Natural killer cell (primary cell): ENCODE measurements at regions of chr12 and their contacts with region 1.

Region 1: GRCh38 chr12:122225683-122226407 is at the start of gene DIABLO:
- DNase-seq: peak; percentile 99 to 100
- ATAC-seq: peak; percentile 86 to 96 (median 89)
- H3K4me3 ChIP-seq: peak within 1 kb of the TSS; percentile 93
- H3K4me3 Mint-ChIP-seq: peak within 1 kb of the TSS; percentile 93
- H3K27ac ChIP-seq: peak within 1 kb of the TSS; percentile 97
- H3K27ac Mint-ChIP-seq: peak within 1 kb of the TSS; percentile 93 to 99
- H3K4me1 ChIP-seq: peaks cover 32% of the 10 kb centered on the region
- H3K4me1 Mint-ChIP-seq: peaks cover 39 to 42% of the 10 kb centered on the region in 2 donors
- H3K27me3 ChIP-seq: no peaks in the 10 kb centered on the region
- H3K27me3 Mint-ChIP-seq: no peaks in the 10 kb centered on the region
- CTCF ChIP-seq: no peak
- total RNA-seq, gene DIABLO: 84.8 to 102 (median 101) TPM

Region 2: DNA sequence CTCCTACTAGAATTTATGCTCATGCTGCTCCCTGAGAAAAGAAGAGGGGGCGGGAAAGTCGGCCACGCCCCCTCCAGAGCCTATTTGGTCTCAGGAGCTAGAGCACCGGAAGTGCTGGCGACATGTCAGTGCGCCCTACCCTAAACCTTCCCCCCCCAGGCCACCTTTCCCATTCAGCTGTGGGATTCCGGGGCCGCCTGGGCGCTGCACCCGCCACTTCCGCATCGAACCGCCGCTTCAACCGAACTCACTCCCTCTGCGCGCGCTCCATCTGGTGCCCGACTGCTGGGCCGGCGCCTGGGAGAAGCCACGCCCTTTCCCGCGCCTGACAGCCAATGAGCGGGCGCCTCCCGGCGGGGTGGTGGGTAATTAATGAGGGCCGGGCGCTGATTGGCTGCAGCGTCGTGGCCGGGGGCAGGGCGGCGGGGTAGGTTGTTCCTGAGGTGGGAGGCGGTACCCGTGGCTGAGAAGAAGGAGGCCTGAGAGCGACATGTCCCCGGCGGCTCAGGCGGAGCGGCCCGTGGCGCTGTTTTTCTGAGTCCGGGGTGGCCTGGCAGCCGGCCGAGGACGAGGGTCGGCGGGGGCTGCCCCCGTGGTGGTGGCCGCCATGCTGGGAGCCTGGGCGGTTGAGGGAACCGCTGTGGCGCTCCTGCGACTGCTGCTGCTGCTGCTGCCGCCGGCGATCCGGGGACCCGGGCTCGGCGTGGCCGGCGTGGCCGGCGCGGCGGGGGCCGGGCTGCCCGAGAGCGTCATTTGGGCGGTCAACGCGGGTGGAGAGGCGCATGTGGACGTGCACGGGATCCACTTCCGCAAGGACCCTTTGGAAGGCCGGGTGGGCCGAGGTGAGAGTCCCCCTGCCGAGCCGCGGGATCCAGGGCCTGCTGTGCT is 1538.9 kb before region 1 on chr12 and contains the start of gene MLEC:
- intact Hi-C with region 1: loop called (anchors 5 kb)
- DNase-seq: peak; percentile 99
- ATAC-seq: peak; percentile 82 to 92 (median 83)
- H3K4me3 ChIP-seq: peak within 1 kb of the TSS; percentile 58
- H3K4me3 Mint-ChIP-seq: peak within 1 kb of the TSS; percentile 93
- H3K27ac ChIP-seq: peak within 1 kb of the TSS; percentile 80
- H3K27ac Mint-ChIP-seq: peak within 1 kb of the TSS; percentile 90
- H3K4me1 ChIP-seq: peaks cover 40% of the 10 kb centered on the region
- H3K4me1 Mint-ChIP-seq: peaks cover 34 to 42% of the 10 kb centered on the region in 2 donors
- H3K27me3 ChIP-seq: no peaks in the 10 kb centered on the region
- H3K27me3 Mint-ChIP-seq: no peaks in the 10 kb centered on the region
- CTCF ChIP-seq: no peak
- total RNA-seq, gene MLEC: 47.4 to 52.8 (median 49.6) TPM

Region 3: DNA sequence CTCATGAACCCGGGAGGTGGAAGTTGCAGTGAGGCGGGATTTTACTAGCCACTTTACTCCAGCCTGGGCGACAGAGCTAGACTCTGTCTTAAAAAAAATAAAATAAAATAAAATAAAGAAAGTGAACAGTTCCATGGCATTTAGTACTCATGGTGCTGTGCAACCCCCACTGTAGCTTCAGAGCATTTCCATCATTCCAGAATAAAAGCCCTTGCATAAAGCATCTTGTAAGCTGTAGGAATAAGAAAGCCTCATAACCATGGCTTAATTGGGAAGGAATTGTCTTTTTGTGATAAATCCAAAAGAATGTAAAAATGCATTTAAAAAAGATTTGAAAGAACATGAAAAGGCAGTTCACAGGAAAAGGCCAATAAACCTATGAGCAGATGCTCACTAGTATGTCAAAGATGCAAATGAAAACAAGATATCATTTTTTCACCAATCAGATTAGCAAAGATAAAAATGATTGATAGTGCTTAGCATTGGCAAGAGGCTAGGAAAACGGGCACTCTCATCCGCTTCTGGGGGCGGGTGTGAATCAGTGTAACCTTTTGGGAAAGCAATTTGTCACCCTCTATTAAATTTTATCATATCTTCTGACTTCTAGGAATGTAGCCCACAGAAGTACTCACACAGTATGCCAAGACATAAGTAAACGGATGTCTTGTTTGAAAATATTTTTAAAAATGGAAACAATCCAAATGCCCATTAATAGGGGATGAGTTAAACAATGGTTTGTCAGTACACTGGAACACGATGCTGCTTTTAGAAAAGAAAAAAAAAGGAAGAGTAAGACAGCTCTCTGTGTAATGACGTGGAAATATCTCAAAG is 260.8 kb before region 1 on chr12:
- intact Hi-C with region 1: no loop called
- DNase-seq: no peak
- ATAC-seq: no peak
- H3K4me3 ChIP-seq: no peak overlapping the region
- H3K4me3 Mint-ChIP-seq: no peak overlapping the region
- H3K27ac ChIP-seq: no peak overlapping the region
- H3K27ac Mint-ChIP-seq: no peak overlapping the region
- H3K4me1 ChIP-seq: peaks cover 12% of the 10 kb centered on the region
- H3K4me1 Mint-ChIP-seq: no peaks in the 10 kb centered on the region
- H3K27me3 ChIP-seq: no peaks in the 10 kb centered on the region
- H3K27me3 Mint-ChIP-seq: no peaks in the 10 kb centered on the region
- CTCF ChIP-seq: no peak

Region 4: DNA sequence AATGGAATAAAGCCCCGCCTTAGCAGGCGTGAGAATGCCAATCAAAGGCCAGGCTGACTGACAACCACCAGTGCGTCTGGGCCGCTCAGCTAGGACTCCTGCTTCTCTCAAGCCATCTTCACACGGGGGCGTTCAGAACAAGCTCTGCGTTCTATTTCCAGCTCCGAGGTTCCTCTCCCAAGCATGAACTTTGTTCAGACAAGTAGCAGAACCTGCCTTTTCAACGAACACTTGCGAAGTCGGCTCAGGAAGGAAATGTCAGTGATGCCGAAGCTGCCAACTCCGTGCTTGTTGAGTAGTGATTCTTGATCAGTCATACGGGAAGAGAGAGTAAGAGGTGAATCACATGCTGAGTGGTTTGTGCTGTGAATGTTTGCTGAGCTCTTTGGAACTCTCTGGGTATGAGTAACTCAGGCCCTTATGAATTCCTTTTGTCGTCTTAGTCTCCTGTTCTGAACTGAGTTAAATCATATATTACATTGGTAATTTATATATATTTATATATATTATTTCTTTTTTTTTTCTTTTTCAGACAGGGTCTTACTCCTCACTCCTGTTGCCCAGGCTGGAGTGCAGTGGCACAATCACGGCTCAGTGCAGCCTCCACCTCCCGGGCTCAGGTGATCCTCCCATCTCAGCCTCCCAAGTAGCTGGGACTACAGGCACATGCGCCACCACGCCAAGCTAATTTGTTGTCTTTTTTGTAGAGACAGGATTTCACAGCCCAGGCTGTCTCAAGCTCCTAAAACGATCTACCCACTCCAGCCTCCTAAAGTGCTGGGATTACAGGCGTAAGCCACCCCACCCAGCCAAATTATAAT is 233.6 kb before region 1 on chr12:
- intact Hi-C with region 1: no loop called
- DNase-seq: peak in 1 of 2 donors; percentile 51
- ATAC-seq: peak; percentile 34 to 45 (median 37)
- H3K4me3 ChIP-seq: no peak overlapping the region
- H3K4me3 Mint-ChIP-seq: no peak overlapping the region
- H3K27ac ChIP-seq: peak overlapping the region; percentile 14
- H3K27ac Mint-ChIP-seq: no peak overlapping the region
- H3K4me1 ChIP-seq: peaks cover 4% of the 10 kb centered on the region
- H3K4me1 Mint-ChIP-seq: no peaks in the 10 kb centered on the region
- H3K27me3 ChIP-seq: no peaks in the 10 kb centered on the region
- H3K27me3 Mint-ChIP-seq: peaks cover 0 to 5% of the 10 kb centered on the region in 2 donors
- CTCF ChIP-seq: no peak

Region 5: GRCh38 chr12:122174155-122174845 is 51.5 kb before region 1 on chr12 and contains the start of gene IL31:
- intact Hi-C with region 1: no loop called
- DNase-seq: no peak
- ATAC-seq: no peak
- H3K4me3 ChIP-seq: no peak within 1 kb of the TSS
- H3K4me3 Mint-ChIP-seq: no peak within 1 kb of the TSS
- H3K27ac ChIP-seq: no peak within 1 kb of the TSS
- H3K27ac Mint-ChIP-seq: no peak within 1 kb of the TSS
- H3K4me1 ChIP-seq: no peaks in the 10 kb centered on the region
- H3K4me1 Mint-ChIP-seq: no peaks in the 10 kb centered on the region
- H3K27me3 ChIP-seq: no peaks in the 10 kb centered on the region
- H3K27me3 Mint-ChIP-seq: no peaks in the 10 kb centered on the region
- CTCF ChIP-seq: no peak
- total RNA-seq, gene IL31: not detected

Region 6: GRCh38 chr12:122265931-122266771 is 40.3 kb after region 1 on chr12 and contains the start of gene VPS33A:
- intact Hi-C with region 1: loop called (anchors 2 kb)
- DNase-seq: peak; percentile 91 to 97
- ATAC-seq: peak; percentile 86 to 95 (median 89)
- H3K4me3 ChIP-seq: peak within 1 kb of the TSS; percentile 86
- H3K4me3 Mint-ChIP-seq: peak within 1 kb of the TSS; percentile 97
- H3K27ac ChIP-seq: peak within 1 kb of the TSS; percentile 94
- H3K27ac Mint-ChIP-seq: peak within 1 kb of the TSS; percentile 98 to 99
- H3K4me1 ChIP-seq: peaks cover 16% of the 10 kb centered on the region
- H3K4me1 Mint-ChIP-seq: peaks cover 10 to 16% of the 10 kb centered on the region in 2 donors
- H3K27me3 ChIP-seq: no peaks in the 10 kb centered on the region
- H3K27me3 Mint-ChIP-seq: peaks cover 0 to 2% of the 10 kb centered on the region in 2 donors
- CTCF ChIP-seq: no peak
- total RNA-seq, gene VPS33A: 19.2 to 26.3 (median 24.1) TPM

Region 7: GRCh38 chr12:122500685-122501488 is 275.0 kb after region 1 on chr12 and contains the start of gene ZCCHC8:
- intact Hi-C with region 1: loop called (anchors 2 kb)
- DNase-seq: peak; percentile 92 to 98
- ATAC-seq: peak; percentile 93 to 99 (median 94)
- H3K4me3 ChIP-seq: peak within 1 kb of the TSS; percentile 83
- H3K4me3 Mint-ChIP-seq: peak within 1 kb of the TSS; percentile 98
- H3K27ac ChIP-seq: peak within 1 kb of the TSS; percentile 96
- H3K27ac Mint-ChIP-seq: peak within 1 kb of the TSS; percentile 95 to 97
- H3K4me1 ChIP-seq: peaks cover 26% of the 10 kb centered on the region
- H3K4me1 Mint-ChIP-seq: peaks cover 19 to 30% of the 10 kb centered on the region in 2 donors
- H3K27me3 ChIP-seq: no peaks in the 10 kb centered on the region
- H3K27me3 Mint-ChIP-seq: no peaks in the 10 kb centered on the region
- CTCF ChIP-seq: no peak
- total RNA-seq, gene ZCCHC8: 57.7 to 71.6 (median 66.6) TPM